Left ventricle myocardium inferior (tissue), 1 donor: ENCODE measurements at regions of chr3 and their contacts with region 1.

Region 1: GRCh38 chr3:46488735-46489361 is 8.9 kb upstream of the RTP3 start:
- DNase-seq: peak; percentile 88
- H3K4me3 ChIP-seq: peak overlapping the region; percentile 24
- H3K27ac ChIP-seq: no peak overlapping the region
- H3K4me1 ChIP-seq: peaks cover 23% of the 10 kb centered on the region
- H3K27me3 ChIP-seq: no peaks in the 10 kb centered on the region
- CTCF ChIP-seq: peak; percentile 99

Region 2: DNA sequence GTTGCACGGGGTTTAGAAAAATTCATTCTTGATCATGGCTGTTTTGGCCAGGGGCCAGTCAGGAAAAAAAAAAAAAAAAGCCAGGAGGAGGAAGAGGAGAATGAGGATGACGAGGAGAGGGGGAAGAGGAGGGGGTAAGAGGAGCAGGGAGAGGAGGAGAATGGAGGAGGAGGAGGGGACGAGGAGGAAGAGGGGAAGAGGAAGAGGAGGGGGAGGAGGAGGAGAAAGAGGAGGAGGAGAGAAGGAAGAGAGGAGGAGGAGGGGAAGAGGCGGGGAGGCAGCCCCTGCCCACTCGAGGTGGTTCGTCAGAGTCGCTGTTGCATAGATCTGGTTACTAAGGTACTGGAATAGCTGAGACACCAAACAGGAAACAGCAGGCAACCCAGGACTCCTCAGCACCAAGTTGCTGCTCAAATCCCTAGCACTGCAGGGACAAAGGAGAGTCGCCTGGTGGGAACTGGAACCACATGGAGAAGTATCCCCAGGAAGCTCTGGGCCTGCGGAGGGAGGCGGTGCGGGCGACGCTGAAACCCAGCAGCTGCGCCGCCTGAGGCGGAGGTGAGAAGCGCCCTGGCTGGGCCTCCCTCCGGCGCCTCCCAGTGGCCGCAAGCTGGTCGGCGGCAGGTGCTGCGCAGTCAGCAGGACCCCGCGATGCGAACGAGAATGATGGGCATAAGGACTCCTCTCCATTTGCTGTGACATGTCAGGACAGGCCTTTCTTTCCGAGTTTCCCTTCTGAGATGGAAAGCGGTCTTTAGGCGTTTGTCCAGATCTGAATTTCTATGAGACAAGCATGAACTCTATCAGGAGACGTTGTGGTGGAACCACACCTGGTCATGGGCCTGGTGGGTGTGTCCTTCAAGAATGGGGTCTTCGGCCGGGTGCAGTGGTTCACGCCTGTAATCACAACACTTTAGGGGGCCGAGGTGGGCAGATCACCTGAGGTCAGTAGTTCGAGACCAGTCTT is 141.0 kb after region 1 on chr3:
- intact Hi-C with region 1: loop called (anchors 2 kb)
- DNase-seq: peak; percentile 84
- H3K4me3 ChIP-seq: peak overlapping the region; percentile 52
- H3K27ac ChIP-seq: peak overlapping the region; percentile 76
- H3K4me1 ChIP-seq: peaks cover 24% of the 10 kb centered on the region
- H3K27me3 ChIP-seq: no peaks in the 10 kb centered on the region
- CTCF ChIP-seq: peak; percentile 99